ENCODE measurements at regions of chr9 and their contacts with region 1.

Region 1: GRCh38 chr9:127525401-127526187 is 74.3 kb downstream of the LRSAM1 start:
- DNase-seq: peak in 1 of 2 experiments; percentile 71
- ATAC-seq: 0 out of 6 replicates have a peak, but pooled peaks of 1 of the 2 experiments have one; percentile 12
- H3K4me3 ChIP-seq: no peak overlapping the region
- H3K27ac ChIP-seq: peak overlapping the region in 1 of 2 experiments; percentile 77; a peak in 2 of 6 replicates
- H3K4me1 ChIP-seq: peaks cover 31% of the 10 kb centered on the region
- CTCF ChIP-seq: peak; percentile 37
- EP300 ChIP-seq: no peak
- POLR2A ChIP-seq: no peak
- RAD21 ChIP-seq: peak; percentile 36 to 60; a peak in 3 of 5 replicates

Region 2: GRCh38 chr9:127283917-127284316 is 241.7 kb before region 1 on chr9:
- CTCF ChIA-PET with region 1: no interaction called
- POLR2A ChIA-PET with region 1: no interaction called
- DNase-seq: peak; percentile 7 to 55
- ATAC-seq: peak; percentile 75 to 89
- H3K4me3 ChIP-seq: no peak overlapping the region
- H3K27ac ChIP-seq: no peak overlapping the region
- H3K4me1 ChIP-seq: no peaks in the 10 kb centered on the region
- CTCF ChIP-seq: peak; percentile 54
- EP300 ChIP-seq: no peak
- POLR2A ChIP-seq: no peak
- RAD21 ChIP-seq: peak; percentile 64 to 69

Region 3: GRCh38 chr9:127537792-127538191 is 12.2 kb after region 1 on chr9:
- CTCF ChIA-PET with region 1: interaction called, 87 read pairs
- POLR2A ChIA-PET with region 1: no interaction called
- DNase-seq: no peak
- ATAC-seq: peak; percentile 71 to 75; a peak in 5 of 6 replicates
- H3K4me3 ChIP-seq: no peak overlapping the region
- H3K27ac ChIP-seq: peak overlapping the region in 1 of 2 experiments; percentile 66; a peak in 3 of 6 replicates
- H3K4me1 ChIP-seq: peaks cover 65% of the 10 kb centered on the region
- CTCF ChIP-seq: peak; percentile 30; the same call in 2 of the 3 replicates
- EP300 ChIP-seq: no peak
- POLR2A ChIP-seq: no peak
- RAD21 ChIP-seq: peak; percentile 43 to 63

Region 4: DNA sequence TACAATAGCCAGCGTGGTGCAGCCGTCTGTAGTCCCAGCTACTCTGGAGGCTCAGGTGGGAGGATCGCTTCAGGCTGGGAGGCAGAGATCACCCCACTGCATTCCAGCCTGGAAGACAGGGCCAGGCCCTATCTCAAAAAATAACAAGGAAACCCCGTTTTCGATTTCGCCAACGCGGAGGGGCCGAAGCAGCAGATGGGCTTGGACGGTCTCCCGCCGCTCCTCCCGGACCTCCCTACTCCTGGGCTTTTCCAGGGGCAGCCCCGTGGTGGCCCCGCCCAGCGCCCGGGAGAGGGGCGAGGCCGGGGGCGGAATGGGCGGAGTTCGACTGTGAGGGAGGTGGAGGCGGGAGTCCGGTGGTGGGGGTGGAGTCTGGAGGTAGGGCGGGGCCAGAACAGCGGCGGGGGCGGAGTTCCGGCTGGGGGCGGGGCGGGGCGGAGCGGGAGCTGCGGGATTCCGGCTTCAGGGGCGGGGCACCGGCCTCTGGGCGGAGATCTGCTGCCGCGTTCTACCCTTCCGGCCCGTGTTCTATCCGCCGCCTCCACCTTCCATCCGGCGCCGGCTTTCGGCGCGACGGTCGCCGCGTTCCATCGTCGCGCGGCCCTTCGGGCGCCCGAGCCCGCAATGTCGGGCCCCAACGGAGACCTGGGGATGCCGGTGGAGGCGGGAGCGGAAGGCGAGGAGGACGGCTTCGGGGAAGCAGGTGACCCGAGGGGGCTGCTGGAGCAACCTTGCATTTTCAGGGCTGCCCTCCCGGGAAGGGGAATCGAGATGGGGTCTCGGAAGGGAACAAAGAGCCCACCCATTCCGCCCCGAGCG is 634.4 kb after region 1 on chr9 and contains the start of gene BBLN:
- CTCF ChIA-PET with region 1: no interaction called
- POLR2A ChIA-PET with region 1: no interaction called
- DNase-seq: peak; percentile 92 to 95
- ATAC-seq: peak; percentile 75 to 91
- H3K4me3 ChIP-seq: peak within 1 kb of the TSS; percentile 85
- H3K27ac ChIP-seq: peak within 1 kb of the TSS; percentile 86 to 89
- H3K4me1 ChIP-seq: peaks cover 11% of the 10 kb centered on the region; the same call in 1 of the 3 replicates
- CTCF ChIP-seq: no peak
- EP300 ChIP-seq: no peak
- POLR2A ChIP-seq: peak; percentile 69
- RAD21 ChIP-seq: no peak
- polyA plus RNA-seq, gene BBLN: 23.0 and 23.8 TPM in 2 replicates